ENCODE measurements at regions of chr19 and their contacts with region 1.

Region 1: GRCh38 chr19:41746593-41747227 is 8.6 kb upstream of the CEACAM6 start:
- DNase-seq: peak; percentile 26
- H3K4me3 ChIP-seq: no peak overlapping the region
- H3K27ac ChIP-seq: no peak overlapping the region
- H3K4me1 ChIP-seq: no peaks in the 10 kb centered on the region
- H3K27me3 ChIP-seq: peaks cover 4% of the 10 kb centered on the region
- CTCF ChIP-seq: peak; percentile 45 to 75

Region 2: GRCh38 chr19:41641879-41642485 is 104.7 kb before region 1 on chr19:
- CTCF ChIA-PET with region 1: interaction called, 3 read pairs
- dilution Hi-C with region 1: no loop called
- in situ Hi-C with region 1: no loop called
- intact Hi-C with region 1: loop called (anchors 5 kb)
- DNase-seq: peak; percentile 30
- H3K4me3 ChIP-seq: no peak overlapping the region
- H3K27ac ChIP-seq: no peak overlapping the region
- H3K4me1 ChIP-seq: no peaks in the 10 kb centered on the region
- H3K27me3 ChIP-seq: no peaks in the 10 kb centered on the region
- CTCF ChIP-seq: peak; percentile 90 to 91

Region 3: DNA sequence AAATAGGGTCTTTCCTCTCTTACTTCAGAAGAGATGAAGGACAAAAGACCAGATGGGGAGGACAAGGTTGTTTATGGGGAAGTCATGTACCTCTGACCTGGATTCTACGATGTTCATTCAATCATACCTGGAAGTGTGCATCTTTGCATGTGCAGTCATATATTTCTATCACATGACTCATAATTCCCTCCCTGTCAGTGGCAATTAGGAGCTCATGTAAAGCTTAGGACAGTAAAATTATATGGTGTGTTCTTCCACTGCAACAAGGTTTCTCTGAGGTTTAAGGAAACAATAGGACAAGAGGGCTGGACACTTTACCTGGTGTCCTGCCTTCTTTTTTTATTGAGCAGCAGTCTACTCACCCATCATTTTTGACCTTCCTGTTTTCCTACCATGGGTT is 78.4 kb before region 1 on chr19:
- CTCF ChIA-PET with region 1: no interaction called
- dilution Hi-C with region 1: no loop called
- in situ Hi-C with region 1: no loop called
- intact Hi-C with region 1: no loop called
- DNase-seq: no peak
- H3K4me3 ChIP-seq: no peak overlapping the region
- H3K27ac ChIP-seq: no peak overlapping the region
- H3K4me1 ChIP-seq: no peaks in the 10 kb centered on the region
- H3K27me3 ChIP-seq: no peaks in the 10 kb centered on the region
- CTCF ChIP-seq: no peak

Region 4: DNA sequence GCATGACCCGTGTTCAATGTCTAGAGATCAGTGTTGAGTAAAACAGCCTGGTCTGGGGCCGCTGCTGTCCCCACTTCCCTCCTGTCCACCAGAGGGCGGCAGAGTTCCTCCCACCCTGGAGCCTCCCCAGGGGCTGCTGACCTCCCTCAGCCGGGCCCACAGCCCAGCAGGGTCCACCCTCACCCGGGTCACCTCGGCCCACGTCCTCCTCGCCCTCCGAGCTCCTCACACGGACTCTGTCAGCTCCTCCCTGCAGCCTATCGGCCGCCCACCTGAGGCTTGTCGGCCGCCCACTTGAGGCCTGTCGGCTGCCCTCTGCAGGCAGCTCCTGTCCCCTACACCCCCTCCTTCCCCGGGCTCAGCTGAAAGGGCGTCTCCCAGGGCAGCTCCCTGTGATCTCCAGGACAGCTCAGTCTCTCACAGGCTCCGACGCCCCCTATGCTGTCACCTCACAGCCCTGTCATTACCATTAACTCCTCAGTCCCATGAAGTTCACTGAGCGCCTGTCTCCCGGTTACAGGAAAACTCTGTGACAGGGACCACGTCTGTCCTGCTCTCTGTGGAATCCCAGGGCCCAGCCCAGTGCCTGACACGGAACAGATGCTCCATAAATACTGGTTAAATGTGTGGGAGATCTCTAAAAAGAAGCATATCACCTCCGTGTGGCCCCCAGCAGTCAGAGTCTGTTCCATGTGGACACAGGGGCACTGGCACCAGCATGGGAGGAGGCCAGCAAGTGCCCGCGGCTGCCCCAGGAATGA is 39.8 kb before region 1 on chr19:
- CTCF ChIA-PET with region 1: no interaction called
- dilution Hi-C with region 1: no loop called
- in situ Hi-C with region 1: no loop called
- intact Hi-C with region 1: loop called (anchors 1 kb)
- DNase-seq: peak; percentile 51
- H3K4me3 ChIP-seq: peak overlapping the region in 2 of 3 experiments; percentile 23 to 33
- H3K27ac ChIP-seq: no peak overlapping the region
- H3K4me1 ChIP-seq: peaks cover 4% of the 10 kb centered on the region
- H3K27me3 ChIP-seq: no peaks in the 10 kb centered on the region
- CTCF ChIP-seq: peak; percentile 71 to 78

Region 5: DNA sequence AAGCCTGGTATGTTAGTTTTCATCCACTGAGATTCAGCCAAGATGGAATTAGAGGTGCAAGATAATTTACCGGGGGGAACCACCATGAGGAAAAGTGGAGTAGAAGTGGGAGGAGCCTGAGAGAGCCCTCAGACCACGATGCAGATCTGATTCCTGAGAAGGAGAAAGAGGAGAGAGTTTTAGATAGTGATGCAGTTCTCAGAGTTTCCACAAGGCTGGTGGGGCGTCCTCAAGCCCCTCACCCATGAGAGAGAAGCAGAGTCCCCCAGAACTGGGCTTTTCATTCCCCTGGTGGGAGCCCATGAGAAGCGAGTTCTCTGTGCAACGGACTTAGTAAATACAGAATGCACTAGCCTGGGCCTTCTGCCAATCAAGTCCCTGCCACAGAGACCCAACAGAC is 20.2 kb before region 1 on chr19:
- CTCF ChIA-PET with region 1: no interaction called
- dilution Hi-C with region 1: no loop called
- in situ Hi-C with region 1: no loop called
- intact Hi-C with region 1: no loop called
- DNase-seq: no peak
- H3K4me3 ChIP-seq: no peak overlapping the region
- H3K27ac ChIP-seq: no peak overlapping the region
- H3K4me1 ChIP-seq: no peaks in the 10 kb centered on the region
- H3K27me3 ChIP-seq: peaks cover 2% of the 10 kb centered on the region
- CTCF ChIP-seq: no peak

Region 6: DNA sequence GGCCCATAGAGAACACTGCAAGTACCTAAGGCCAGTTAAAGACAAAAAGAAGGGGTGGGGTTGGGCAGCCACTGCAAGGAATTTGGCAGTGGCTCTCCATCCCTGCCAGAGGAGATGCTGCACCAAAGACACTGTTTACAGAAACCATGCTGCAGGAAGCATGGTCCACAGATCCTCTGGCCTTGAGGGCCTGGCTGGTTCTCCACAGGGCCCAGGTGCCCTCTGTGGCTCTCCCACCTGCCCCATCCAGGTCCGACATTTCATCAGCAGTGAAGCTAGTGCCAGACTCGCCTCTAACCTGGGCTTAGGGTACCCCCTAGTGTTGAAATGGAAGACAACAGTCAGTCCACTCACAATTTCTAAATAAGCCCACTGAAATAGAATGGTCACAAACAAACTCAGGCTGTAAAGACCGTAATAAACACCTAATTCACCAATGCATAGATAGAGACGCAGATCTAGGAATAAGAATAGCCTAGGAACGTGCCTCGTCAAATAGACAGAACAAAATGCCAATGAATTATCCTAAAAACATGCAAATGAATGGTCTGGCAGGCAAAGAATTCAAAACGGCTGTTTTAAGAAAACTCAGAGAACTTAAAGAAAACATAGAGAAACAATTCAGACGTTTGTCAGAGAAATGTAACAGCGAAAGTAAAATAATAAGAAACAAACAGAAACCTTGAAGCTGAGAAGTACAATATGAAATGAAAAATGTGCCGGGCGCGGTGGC is 74.5 kb after region 1 on chr19:
- CTCF ChIA-PET with region 1: no interaction called
- dilution Hi-C with region 1: no loop called
- in situ Hi-C with region 1: no loop called
- intact Hi-C with region 1: no loop called
- DNase-seq: peak; percentile 19
- H3K4me3 ChIP-seq: no peak overlapping the region
- H3K27ac ChIP-seq: no peak overlapping the region
- H3K4me1 ChIP-seq: no peaks in the 10 kb centered on the region
- H3K27me3 ChIP-seq: no peaks in the 10 kb centered on the region
- CTCF ChIP-seq: peak; percentile 55 to 69